ENCODE measurements at regions of chr20 and their contacts with region 1.

Region 1: GRCh38 chr20:62032609-62033368 is 32.9 kb downstream of the TAF4 start:
- DNase-seq: no peak
- H3K4me3 ChIP-seq: no peak overlapping the region
- H3K27ac ChIP-seq: no peak overlapping the region
- H3K4me1 ChIP-seq: peaks cover 0 to 16% (median 5%) of the 10 kb centered on the region in 4 experiments; a peak in 6 of 7 replicates
- H3K27me3 ChIP-seq: no peaks in the 10 kb centered on the region
- CTCF ChIP-seq: no peak
- EP300 ChIP-seq: no peak
- POLR2A ChIP-seq: no peak
- RAD21 ChIP-seq: no peak

Region 2: GRCh38 chr20:61608041-61608835 is 424.6 kb before region 1 on chr20:
- CTCF ChIA-PET with region 1: no interaction called
- POLR2A ChIA-PET with region 1: no interaction called
- DNase-seq: peak in 1 of 2 experiments; percentile 65
- H3K4me3 ChIP-seq: no peak overlapping the region
- H3K27ac ChIP-seq: no peak overlapping the region
- H3K4me1 ChIP-seq: no peaks in the 10 kb centered on the region
- H3K27me3 ChIP-seq: peaks cover 0 to 9% (median 5%) of the 10 kb centered on the region in 4 experiments; a peak in 3 of 7 replicates
- CTCF ChIP-seq: no peak
- EP300 ChIP-seq: no peak
- POLR2A ChIP-seq: no peak
- RAD21 ChIP-seq: 0 out of 4 replicates have a peak, but pooled peaks of 1 of the 2 experiments have one; percentile 9

Region 3: DNA sequence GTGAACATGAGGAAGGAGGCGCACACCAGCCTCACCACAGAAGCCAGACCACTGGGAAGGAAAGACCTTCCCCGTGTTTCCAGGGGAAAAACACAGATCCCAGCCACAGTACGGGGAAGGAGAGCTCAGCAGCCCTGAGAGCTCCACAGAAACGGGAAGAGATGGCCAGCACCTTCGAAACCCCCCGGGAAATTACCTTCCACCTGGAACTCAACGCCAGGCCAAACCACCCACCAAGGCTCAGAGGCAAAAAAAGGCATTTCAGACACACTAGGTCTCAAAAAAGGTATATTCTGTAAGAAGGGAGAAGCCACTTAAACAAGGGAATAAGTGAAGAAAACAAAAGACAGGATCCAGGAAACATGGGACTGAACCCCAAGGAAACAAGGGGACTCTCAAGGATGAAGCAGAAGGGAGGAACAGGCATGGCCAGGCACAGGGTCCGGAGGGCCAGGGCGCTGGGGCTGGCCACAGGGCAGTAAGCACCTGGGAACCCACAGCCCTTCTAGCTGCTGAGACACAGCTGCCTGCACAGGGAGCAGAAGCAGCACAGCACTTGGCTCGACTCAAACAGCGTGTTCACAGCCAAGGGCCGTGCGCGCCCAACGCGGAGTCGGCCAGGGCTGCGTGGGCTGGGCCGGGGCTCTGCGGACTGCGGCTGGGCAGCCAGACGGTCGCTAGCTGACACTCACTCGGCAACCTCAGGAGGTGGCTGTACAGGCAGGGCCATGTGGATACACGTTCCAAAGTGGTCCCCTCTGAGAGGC is 11.7 kb before region 1 on chr20:
- CTCF ChIA-PET with region 1: interaction called, 11 read pairs
- POLR2A ChIA-PET with region 1: interaction called, 7 read pairs
- DNase-seq: no peak
- H3K4me3 ChIP-seq: no peak overlapping the region
- H3K27ac ChIP-seq: no peak overlapping the region
- H3K4me1 ChIP-seq: peaks cover 0 to 9% (median 5%) of the 10 kb centered on the region in 4 experiments
- H3K27me3 ChIP-seq: no peaks in the 10 kb centered on the region
- CTCF ChIP-seq: no peak
- EP300 ChIP-seq: no peak
- POLR2A ChIP-seq: no peak
- RAD21 ChIP-seq: no peak

Region 4: GRCh38 chr20:62073323-62073722 is 40.5 kb after region 1 on chr20:
- CTCF ChIA-PET with region 1: no interaction called
- POLR2A ChIA-PET with region 1: no interaction called
- DNase-seq: no peak
- H3K4me3 ChIP-seq: no peak overlapping the region
- H3K27ac ChIP-seq: no peak overlapping the region
- H3K4me1 ChIP-seq: no peaks in the 10 kb centered on the region
- H3K27me3 ChIP-seq: no peaks in the 10 kb centered on the region
- CTCF ChIP-seq: no peak
- EP300 ChIP-seq: no peak
- POLR2A ChIP-seq: no peak
- RAD21 ChIP-seq: no peak